ENCODE measurements at regions of chr7 and their contacts with region 1.

Region 1: GRCh38 chr7:113480537-113480936 is 362.2 kb upstream of the SMIM30 start:
- DNase-seq: no peak
- H3K4me3 ChIP-seq: no peak overlapping the region
- H3K27ac ChIP-seq: no peak overlapping the region
- H3K4me1 ChIP-seq: no peaks in the 10 kb centered on the region
- H3K27me3 ChIP-seq: no peaks in the 10 kb centered on the region
- CTCF ChIP-seq: no peak

Region 2: DNA sequence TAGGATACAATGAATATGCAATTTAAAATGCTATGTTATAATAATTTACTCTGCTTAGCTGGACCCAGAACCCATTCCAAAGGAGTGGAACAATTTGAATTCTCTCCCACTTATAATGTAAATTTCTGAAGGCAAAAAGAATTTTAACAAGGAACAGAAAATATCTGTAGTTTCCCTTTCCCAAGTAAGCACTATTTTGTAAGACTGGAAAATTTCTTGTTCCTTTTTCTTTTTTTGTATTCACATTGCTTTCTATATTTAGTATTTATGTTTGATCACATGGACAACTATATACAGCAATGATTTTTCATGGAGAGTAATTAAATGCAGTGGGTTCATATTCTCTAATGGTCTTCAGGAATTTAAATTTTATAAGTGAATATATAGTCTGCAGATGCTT is 521.3 kb before region 1 on chr7:
- CTCF ChIA-PET with region 1: no interaction called
- POLR2A ChIA-PET with region 1: interaction called, 16 read pairs
- intact Hi-C with region 1: no loop called
- DNase-seq: no peak
- H3K4me3 ChIP-seq: no peak overlapping the region
- H3K27ac ChIP-seq: no peak overlapping the region
- H3K4me1 ChIP-seq: no peaks in the 10 kb centered on the region
- H3K27me3 ChIP-seq: no peaks in the 10 kb centered on the region
- CTCF ChIP-seq: no peak

Region 3: GRCh38 chr7:113367041-113367586 is 113.4 kb before region 1 on chr7:
- CTCF ChIA-PET with region 1: no interaction called
- POLR2A ChIA-PET with region 1: no interaction called
- intact Hi-C with region 1: no loop called
- DNase-seq: no peak
- H3K4me3 ChIP-seq: no peak overlapping the region
- H3K27ac ChIP-seq: no peak overlapping the region
- H3K4me1 ChIP-seq: no peaks in the 10 kb centered on the region
- H3K27me3 ChIP-seq: no peaks in the 10 kb centered on the region
- CTCF ChIP-seq: no peak

Region 4: GRCh38 chr7:113383638-113384037 is 96.9 kb before region 1 on chr7:
- CTCF ChIA-PET with region 1: no interaction called
- POLR2A ChIA-PET with region 1: no interaction called
- intact Hi-C with region 1: no loop called
- DNase-seq: no peak
- H3K4me3 ChIP-seq: no peak overlapping the region
- H3K27ac ChIP-seq: no peak overlapping the region
- H3K4me1 ChIP-seq: no peaks in the 10 kb centered on the region
- H3K27me3 ChIP-seq: no peaks in the 10 kb centered on the region
- CTCF ChIP-seq: no peak

Region 5: DNA sequence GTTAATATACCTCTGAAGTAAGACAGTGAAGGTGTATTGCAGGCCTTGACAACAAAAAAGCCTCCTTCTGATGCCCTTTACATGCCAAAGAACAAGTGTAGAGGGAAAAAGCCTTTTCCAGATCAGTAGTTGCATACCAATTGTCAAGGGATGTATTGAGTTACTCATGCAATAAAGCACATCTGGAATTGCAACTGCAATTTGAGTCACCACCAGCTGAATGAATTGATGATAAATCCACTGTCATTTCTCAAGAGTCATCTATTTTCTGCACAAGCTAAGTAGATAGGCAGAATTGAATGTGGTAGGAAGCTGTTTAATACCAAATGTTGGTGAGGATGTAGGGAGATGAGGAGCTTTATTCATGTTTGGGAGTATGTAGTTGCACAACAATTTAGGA is 36.3 kb before region 1 on chr7:
- CTCF ChIA-PET with region 1: no interaction called
- POLR2A ChIA-PET with region 1: no interaction called
- intact Hi-C with region 1: no loop called
- DNase-seq: no peak
- H3K4me3 ChIP-seq: no peak overlapping the region
- H3K27ac ChIP-seq: no peak overlapping the region
- H3K4me1 ChIP-seq: no peaks in the 10 kb centered on the region
- H3K27me3 ChIP-seq: no peaks in the 10 kb centered on the region
- CTCF ChIP-seq: no peak

Region 6: DNA sequence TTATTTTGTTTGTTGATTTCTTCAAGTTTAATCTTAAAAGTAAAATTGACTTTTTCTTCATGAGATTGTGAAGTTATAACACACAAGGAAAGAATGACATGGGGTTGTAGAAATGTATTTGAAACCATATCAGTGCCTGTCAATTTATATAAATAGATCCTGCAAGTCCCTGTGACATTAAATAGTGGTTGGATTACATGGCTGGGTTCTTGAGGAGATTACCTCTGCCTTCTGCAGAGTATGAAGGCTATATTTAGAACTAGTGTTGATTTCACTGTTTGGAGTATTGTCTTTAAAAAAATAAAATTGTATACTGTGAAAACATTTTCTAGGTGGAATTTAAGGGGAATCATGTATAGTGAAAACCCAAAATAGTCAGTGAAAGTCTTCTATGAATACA is 23.6 kb after region 1 on chr7:
- CTCF ChIA-PET with region 1: no interaction called
- POLR2A ChIA-PET with region 1: no interaction called
- intact Hi-C with region 1: no loop called
- DNase-seq: no peak
- H3K4me3 ChIP-seq: no peak overlapping the region
- H3K27ac ChIP-seq: no peak overlapping the region
- H3K4me1 ChIP-seq: no peaks in the 10 kb centered on the region
- H3K27me3 ChIP-seq: no peaks in the 10 kb centered on the region
- CTCF ChIP-seq: no peak

Measured in PC-9 (cell line).